Heart right ventricle (tissue), 16 donors: ENCODE measurements at regions of chr2 and their contacts with region 1.

Region 1: DNA sequence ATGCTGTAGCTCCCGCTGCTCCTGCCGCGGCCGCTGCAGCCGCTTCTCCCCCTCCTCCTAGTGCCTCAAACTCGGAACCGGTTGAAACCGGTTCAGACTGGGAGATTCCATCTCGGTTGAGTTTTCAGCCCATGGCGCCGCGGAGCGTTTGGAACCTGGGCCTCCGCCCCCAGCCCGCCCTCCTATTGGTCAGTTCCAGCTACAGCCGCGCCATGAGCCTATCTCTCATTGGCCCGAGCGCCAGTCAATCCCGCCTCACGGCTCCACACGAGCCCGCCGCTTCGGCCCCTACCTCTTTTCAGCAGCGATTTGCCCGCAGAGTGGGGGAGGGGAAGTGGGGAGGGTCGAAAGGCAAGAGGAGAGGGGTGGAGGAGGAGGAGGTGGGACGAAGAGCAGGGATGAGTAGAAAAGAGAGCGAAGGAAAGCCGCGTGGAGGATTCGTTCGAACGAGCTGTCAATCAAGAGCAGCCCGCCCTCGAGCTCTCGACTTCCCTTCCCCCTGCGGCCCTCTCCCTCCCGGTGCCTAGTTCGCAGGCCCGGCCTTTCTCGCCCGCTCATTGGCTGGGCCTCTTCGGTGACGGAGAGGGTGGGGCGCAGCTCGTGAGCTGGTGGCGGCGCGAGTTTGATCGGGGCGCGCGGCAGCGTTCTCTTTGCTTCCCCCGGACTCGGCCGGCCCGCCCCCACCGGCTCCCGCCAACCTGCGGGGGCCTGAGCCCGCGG is at the start of gene XPO1:
- DNase-seq: peak; percentile 99 to 100
- ATAC-seq: peak; percentile 93 to 98 (median 95)
- H3K4me3 ChIP-seq: peak within 1 kb of the TSS; percentile 58 to 81 (median 72)
- H3K27ac ChIP-seq: peak within 1 kb of the TSS; percentile 85 to 99 (median 94)
- H3K4me1 ChIP-seq: peaks cover 0 to 36% (median 32%) of the 10 kb centered on the region in 9 donors
- H3K27me3 ChIP-seq: no peaks in the 10 kb centered on the region
- CTCF ChIP-seq: peak in 1 of 9 donors; percentile 6
- total RNA-seq, gene XPO1: 50.0 to 77.3 (median 67.9) TPM

Region 2: DNA sequence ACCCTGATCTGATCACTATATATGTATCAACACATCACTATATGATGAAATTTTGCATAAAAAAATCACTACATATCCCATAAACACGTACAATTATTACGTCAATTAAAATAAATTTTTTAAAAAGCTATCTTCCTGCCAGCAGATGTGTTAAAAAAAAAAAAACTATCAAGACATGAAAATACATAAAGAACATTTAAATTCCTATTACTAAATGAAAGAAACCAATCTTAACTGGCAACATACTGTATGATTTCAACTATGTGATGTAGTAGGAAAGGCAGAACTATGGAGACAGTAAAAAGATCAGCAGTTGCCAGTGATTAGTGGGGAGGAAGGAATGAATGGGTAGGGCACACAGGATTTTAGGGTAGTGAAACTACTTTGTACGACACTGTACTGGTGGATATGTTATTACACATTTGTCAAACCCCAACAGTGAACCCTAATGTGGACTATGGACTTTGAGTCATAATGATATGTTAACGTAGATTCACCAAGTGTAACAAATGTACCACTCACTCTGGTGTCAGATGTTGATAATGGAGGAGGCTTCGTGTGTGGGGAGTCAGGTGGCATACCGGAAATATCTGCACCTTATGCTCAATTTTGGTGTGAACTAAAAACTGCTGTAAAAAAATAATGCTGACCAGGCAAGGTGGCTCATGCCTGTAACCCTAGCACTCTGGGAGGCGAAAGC is 94.9 kb before region 1 on chr2:
- intact Hi-C with region 1: no loop called
- DNase-seq: no peak
- ATAC-seq: no peak
- H3K4me3 ChIP-seq: no peak overlapping the region
- H3K27ac ChIP-seq: no peak overlapping the region
- H3K4me1 ChIP-seq: peaks cover 8 to 62% (median 42%) of the 10 kb centered on the region in 9 donors
- H3K27me3 ChIP-seq: no peaks in the 10 kb centered on the region
- CTCF ChIP-seq: no peak

Region 3: DNA sequence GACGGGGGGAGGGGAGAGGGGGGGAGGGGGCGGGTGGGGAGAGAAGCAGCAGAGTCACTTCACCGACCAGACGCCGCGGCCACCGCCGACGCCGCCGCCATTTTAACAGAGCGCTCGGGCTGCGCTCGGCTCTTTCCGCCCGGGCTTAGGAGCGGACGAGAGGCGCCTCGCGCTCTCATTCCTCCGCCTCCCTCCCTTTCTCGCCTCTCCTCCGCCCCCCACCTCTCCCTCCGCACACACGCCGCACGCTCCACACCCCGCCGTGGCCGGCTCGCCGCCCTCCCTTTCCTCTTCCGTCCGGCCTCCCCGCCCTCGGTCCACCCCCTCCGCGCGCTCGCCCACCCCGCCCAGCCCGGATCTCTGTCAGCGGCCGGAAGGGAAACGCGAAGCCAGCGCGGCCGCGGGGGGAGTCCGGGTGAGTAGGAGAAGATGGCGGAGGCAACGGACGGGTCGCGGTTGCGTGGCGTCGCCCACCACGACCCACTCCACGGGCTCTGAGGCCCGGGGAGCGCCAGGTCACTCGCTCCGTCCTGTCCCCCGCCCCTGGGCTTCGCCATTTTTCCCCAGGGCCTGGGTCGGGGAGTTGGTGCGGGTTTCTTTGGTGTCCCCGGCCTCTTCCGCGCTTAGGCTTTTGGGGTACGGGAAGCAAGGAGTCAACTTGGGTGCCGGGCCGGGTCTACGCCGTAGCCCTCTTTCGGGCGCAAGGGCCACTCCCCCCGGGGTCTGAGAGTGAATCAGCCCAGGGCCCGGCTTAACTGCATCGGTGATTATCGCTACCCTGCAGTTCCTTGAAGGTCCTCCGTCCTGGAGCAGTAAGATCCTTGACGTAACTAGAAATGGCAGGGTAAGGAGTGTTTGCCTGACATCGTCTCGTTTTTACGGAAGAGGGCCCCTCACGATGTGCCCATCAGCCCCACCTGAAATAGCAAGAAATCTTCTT is 67.1 kb before region 1 on chr2 and contains the start of gene USP34:
- intact Hi-C with region 1: loop called in 5 of 10 experiments (anchors 5 to 10 kb)
- DNase-seq: peak; percentile 96
- ATAC-seq: peak; percentile 97 to 98 (median 97)
- H3K4me3 ChIP-seq: peak within 1 kb of the TSS; percentile 80 to 99 (median 92)
- H3K27ac ChIP-seq: peak within 1 kb of the TSS; percentile 96 to 100 (median 99)
- H3K4me1 ChIP-seq: peaks cover 0 to 45% (median 26%) of the 10 kb centered on the region in 9 donors
- H3K27me3 ChIP-seq: no peaks in the 10 kb centered on the region
- CTCF ChIP-seq: no peak
- total RNA-seq, gene USP34: 46.1 to 75.7 (median 60.8) TPM

Region 4: GRCh38 chr2:61658841-61659780 is 120.8 kb after region 1 on chr2:
- intact Hi-C with region 1: loop called in 2 of 10 experiments (anchors 5 kb)
- DNase-seq: peak in 1 of 2 donors; percentile 32
- ATAC-seq: peak; percentile 73 to 93 (median 91)
- H3K4me3 ChIP-seq: no peak overlapping the region
- H3K27ac ChIP-seq: peak overlapping the region; percentile 78 to 90 (median 84)
- H3K4me1 ChIP-seq: peaks cover 0 to 31% (median 17%) of the 10 kb centered on the region in 9 donors
- H3K27me3 ChIP-seq: no peaks in the 10 kb centered on the region
- CTCF ChIP-seq: peak; percentile 20 to 67 (median 48)

Region 5: GRCh38 chr2:61764035-61764800 is 225.9 kb after region 1 on chr2:
- intact Hi-C with region 1: loop called in 7 of 10 experiments (anchors 2 to 10 kb)
- DNase-seq: peak; percentile 97 to 98
- ATAC-seq: peak; percentile 99 to 100 (median 100)
- H3K4me3 ChIP-seq: peak overlapping the region; percentile 40 to 86 (median 64)
- H3K27ac ChIP-seq: peak overlapping the region; percentile 88 to 99 (median 97)
- H3K4me1 ChIP-seq: peaks cover 0 to 14% (median 7%) of the 10 kb centered on the region in 9 donors
- H3K27me3 ChIP-seq: no peaks in the 10 kb centered on the region
- CTCF ChIP-seq: no peak

Region 6: DNA sequence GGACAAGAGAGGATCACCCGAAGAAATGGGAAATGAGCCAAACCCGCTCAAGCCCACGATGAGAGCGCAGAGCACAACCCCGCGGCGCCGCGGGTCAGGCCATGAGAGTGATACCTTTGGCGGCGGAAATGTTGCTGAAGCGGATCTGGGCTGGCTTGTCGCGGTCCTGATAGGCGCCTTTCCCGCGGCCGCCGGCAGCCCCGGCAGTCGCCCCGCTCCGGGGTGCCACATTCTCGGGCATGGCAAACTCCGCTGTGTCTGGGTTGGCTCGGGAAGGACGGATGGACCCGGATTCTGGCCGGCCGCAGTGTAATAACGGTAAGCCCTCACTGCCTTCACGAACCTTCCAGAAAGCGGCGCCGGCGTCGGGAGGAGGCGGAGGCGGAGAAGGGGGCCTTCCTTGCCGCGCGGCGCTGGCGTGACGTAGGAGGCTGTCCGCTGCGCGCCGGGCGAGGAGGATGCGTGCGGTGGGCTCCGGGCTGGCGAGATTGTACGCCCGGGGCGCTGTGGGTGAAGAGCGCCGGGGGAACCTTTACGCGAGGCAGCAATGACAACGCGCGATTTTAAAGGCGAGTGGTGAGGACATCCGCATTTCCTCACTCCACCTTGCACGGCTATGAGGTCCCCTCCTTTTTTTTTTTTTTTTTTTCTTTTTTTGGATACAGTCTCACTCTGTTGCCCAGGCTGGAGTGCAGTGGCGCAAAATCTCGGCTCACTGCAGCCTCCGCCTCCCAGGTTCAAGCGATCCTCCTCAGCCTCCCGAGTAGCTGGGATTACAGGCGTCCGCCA is 350.1 kb after region 1 on chr2 and contains the start of gene CCT4:
- intact Hi-C with region 1: loop called in 1 of 10 experiments (anchors 1 kb)
- DNase-seq: peak; percentile 89 to 91
- ATAC-seq: peak; percentile 90 to 93 (median 91)
- H3K4me3 ChIP-seq: peak within 1 kb of the TSS; percentile 63 to 90 (median 78)
- H3K27ac ChIP-seq: peak within 1 kb of the TSS; percentile 89 to 99 (median 96)
- H3K4me1 ChIP-seq: peaks cover 3 to 31% (median 19%) of the 10 kb centered on the region in 9 donors
- H3K27me3 ChIP-seq: no peaks in the 10 kb centered on the region
- CTCF ChIP-seq: no peak
- total RNA-seq, gene CCT4: 86.0 to 118 (median 98.7) TPM